ENCODE measurements at regions of chr17 and their contacts with region 1.

Region 1: DNA sequence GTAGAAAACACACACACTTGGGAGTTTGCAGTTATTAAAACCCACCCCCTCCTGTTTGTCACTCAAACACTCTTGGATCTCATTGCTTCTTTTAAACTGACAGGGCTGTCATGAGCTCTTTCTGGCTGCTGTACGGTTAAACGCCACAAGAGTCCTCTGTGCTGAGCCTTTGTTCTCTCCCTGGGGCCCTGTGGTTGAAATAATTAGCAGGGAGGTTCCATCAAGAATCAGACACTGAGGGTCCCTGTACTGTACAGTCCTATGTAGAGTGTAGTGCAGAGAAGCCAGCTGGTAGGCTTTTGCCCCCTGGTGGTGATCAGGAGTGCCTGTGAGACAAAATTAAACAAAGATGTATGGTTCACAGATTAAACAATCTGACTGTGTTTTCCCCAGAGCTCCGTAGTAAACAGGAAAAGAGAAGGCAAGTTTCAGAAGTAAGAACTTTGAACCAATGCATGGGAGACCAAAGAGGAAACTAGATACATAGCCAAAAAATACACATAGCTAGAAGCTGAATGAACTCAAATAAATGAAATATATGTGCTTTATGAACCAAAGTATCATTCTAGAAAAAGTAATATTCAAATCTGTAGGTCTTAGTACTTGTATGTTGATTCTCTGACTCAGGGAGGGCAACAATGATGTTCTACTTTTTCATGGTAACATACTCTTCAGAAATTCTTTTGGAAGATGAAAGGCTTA is 1.4 kb upstream of the SSH2 start:
- DNase-seq: peak; percentile 91 to 96 (median 95)
- H3K4me3 ChIP-seq: peak overlapping the region in 6 of 7 experiments; percentile 83 to 98 (median 94)
- H3K27ac ChIP-seq: no peak overlapping the region
- H3K4me1 ChIP-seq: peaks cover 14 to 44% (median 26%) of the 10 kb centered on the region in 4 experiments
- H3K27me3 ChIP-seq: no peaks in the 10 kb centered on the region

Region 2: GRCh38 chr17:29640413-29640812 is 291.0 kb before region 1 on chr17:
- CTCF ChIA-PET with region 1: interaction called, 19 read pairs
- POLR2A ChIA-PET with region 1: interaction called, 5 read pairs
- DNase-seq: peak in 2 of 3 donors; percentile 32 to 51
- H3K4me3 ChIP-seq: no peak overlapping the region
- H3K27ac ChIP-seq: peak overlapping the region in 1 of 2 experiments; percentile 57
- H3K4me1 ChIP-seq: peaks cover 14 to 50% (median 44%) of the 10 kb centered on the region in 4 experiments
- H3K27me3 ChIP-seq: no peaks in the 10 kb centered on the region

Region 3: GRCh38 chr17:29855686-29856085 is 75.7 kb before region 1 on chr17:
- CTCF ChIA-PET with region 1: interaction called, 10 read pairs
- POLR2A ChIA-PET with region 1: no interaction called
- DNase-seq: no peak
- H3K4me3 ChIP-seq: no peak overlapping the region
- H3K27ac ChIP-seq: no peak overlapping the region
- H3K4me1 ChIP-seq: no peaks in the 10 kb centered on the region
- H3K27me3 ChIP-seq: no peaks in the 10 kb centered on the region

Region 4: GRCh38 chr17:29918922-29919856 is 12.2 kb before region 1 on chr17:
- CTCF ChIA-PET with region 1: interaction called, 37 read pairs
- POLR2A ChIA-PET with region 1: interaction called, 6 read pairs
- DNase-seq: peak in 2 of 3 donors; percentile 51 to 63
- H3K4me3 ChIP-seq: no peak overlapping the region
- H3K27ac ChIP-seq: no peak overlapping the region
- H3K4me1 ChIP-seq: peaks cover 5 to 15% (median 11%) of the 10 kb centered on the region in 4 experiments
- H3K27me3 ChIP-seq: no peaks in the 10 kb centered on the region

Region 5: DNA sequence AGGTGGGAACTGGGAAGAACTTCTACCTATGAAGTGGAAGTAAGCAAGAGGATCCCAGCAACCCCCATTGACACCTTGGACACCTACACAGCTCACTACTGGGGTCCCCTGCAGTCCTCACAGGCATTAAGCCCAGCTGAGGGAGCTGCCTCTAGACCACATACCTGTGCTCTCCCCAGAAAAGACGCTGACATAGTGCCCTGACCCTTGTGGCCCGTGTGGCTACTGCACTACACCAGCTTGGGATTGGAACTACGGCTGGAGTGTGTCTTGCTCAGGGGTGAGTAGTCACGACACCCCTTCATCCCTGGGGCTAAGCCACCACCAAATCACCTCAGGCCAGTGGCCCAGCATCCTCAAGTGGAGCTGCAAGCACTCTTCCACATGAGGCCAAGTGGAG is 131.0 kb after region 1 on chr17:
- CTCF ChIA-PET with region 1: no interaction called
- POLR2A ChIA-PET with region 1: no interaction called
- DNase-seq: no peak
- H3K4me3 ChIP-seq: no peak overlapping the region
- H3K27ac ChIP-seq: no peak overlapping the region
- H3K4me1 ChIP-seq: no peaks in the 10 kb centered on the region
- H3K27me3 ChIP-seq: no peaks in the 10 kb centered on the region

Region 6: DNA sequence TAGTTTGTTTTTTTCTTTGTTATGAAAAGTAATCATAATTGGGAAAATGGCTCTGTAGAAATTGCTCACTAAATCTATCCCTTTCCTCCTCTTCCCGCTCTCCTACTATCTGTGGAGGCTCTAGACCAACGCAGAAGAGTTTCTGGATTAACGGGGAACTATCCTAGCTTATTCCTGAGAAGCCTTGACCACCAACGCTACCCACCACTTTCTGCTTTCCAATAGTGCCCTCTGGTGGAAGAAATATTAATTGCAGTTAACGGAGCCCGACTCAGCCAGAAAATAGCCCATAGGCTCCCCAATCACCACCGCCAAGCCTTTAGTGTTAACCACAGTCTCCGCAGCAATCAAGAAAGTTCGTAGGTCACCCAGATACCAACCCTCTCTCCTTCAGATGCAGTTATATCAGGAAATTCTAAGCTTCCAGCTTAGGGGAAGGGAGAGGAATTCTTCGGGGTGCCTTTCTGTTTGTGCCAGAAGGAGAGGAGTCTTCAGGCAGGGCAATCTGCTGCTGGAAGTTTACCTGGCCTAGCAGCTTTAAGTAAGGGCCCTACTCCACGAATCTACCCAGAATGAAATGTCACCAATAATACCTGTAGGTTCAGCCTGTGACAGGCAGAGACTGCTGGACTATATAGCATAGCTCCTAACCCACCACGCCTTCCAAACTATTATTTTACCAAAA is 162.2 kb after region 1 on chr17:
- CTCF ChIA-PET with region 1: interaction called, 12 read pairs
- POLR2A ChIA-PET with region 1: no interaction called
- DNase-seq: peak; percentile 44 to 61 (median 49)
- H3K4me3 ChIP-seq: no peak overlapping the region
- H3K27ac ChIP-seq: no peak overlapping the region
- H3K4me1 ChIP-seq: peaks cover 0 to 4% (median under 1%) of the 10 kb centered on the region in 4 experiments
- H3K27me3 ChIP-seq: no peaks in the 10 kb centered on the region

Measured in common myeloid progenitor, CD34-positive (primary cell).